BJ (cell line): ENCODE measurements at regions of chr12 and their contacts with region 1.

Region 1: GRCh38 chr12:106223485-106224354 is 24.1 kb downstream of the CKAP4 start:
- DNase-seq: no peak
- H3K4me3 ChIP-seq: no peak overlapping the region
- H3K27me3 ChIP-seq: no peaks in the 10 kb centered on the region
- CTCF ChIP-seq: peak; percentile 98

Region 2: GRCh38 chr12:106213662-106214061 is 10.1 kb before region 1 on chr12:
- CTCF ChIA-PET with region 1: interaction called, 22 read pairs
- POLR2A ChIA-PET with region 1: no interaction called
- DNase-seq: no peak
- H3K4me3 ChIP-seq: no peak overlapping the region
- H3K27me3 ChIP-seq: peaks cover 5% of the 10 kb centered on the region
- CTCF ChIP-seq: no peak

Region 3: GRCh38 chr12:106276032-106276740 is 52.5 kb after region 1 on chr12:
- CTCF ChIA-PET with region 1: interaction called, 153 read pairs
- POLR2A ChIA-PET with region 1: no interaction called
- DNase-seq: no peak
- H3K4me3 ChIP-seq: no peak overlapping the region
- H3K27me3 ChIP-seq: no peaks in the 10 kb centered on the region
- CTCF ChIP-seq: no peak

Region 4: GRCh38 chr12:106345739-106346138 is 122.0 kb after region 1 on chr12:
- CTCF ChIA-PET with region 1: interaction called, 15 read pairs
- POLR2A ChIA-PET with region 1: no interaction called
- DNase-seq: no peak
- H3K4me3 ChIP-seq: no peak overlapping the region
- H3K27me3 ChIP-seq: no peaks in the 10 kb centered on the region
- CTCF ChIP-seq: peak; percentile 36; the same call in 1 of the 2 replicates